Naive thymus-derived CD4-positive, alpha-beta T cell (primary cell): ENCODE measurements at regions of chr11 and their contacts with region 1.

Region 1: DNA sequence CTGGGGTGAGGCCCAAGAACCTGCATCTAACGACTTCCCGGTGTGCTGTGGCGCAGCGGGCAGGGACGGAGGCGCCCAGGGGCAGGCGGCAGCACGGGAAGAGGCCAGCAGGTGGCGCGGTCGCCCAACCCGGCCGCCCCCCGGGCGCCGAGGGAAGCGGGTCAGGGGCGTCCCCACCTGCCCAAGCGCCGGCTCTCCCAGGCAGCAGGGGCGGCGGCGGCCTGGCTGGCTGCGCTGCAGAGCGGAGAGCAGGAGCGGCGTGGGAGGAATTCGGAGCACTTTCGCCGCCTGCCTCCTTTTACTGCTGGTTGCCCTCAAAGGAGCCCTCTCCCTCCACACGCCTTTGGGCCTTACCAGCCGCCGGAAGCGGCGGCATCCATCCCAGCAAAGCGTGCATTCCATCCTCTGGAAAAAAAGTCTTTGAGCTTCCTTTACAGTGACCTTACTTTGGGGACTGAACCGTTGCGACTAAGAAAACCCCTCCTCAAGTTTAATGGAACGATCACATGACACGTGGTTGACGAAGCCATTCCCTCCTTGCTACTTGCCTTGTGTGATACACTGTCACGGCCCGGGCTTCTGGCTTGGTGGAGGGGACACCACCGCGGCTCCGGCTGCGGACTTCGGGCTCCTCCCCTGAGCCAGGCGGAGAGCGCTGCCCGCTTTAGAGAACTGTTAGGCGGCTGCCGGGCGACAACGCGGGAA is 106.8 kb upstream of the CLMP start:
- DNase-seq: peak; percentile 20 to 87 (median 50)
- ATAC-seq: peak; percentile 88
- H3K4me3 ChIP-seq: peak overlapping the region; percentile 40
- H3K4me3 Mint-ChIP-seq: peak overlapping the region; percentile 61 to 77 (median 70)
- H3K27ac ChIP-seq: no peak overlapping the region
- H3K27ac Mint-ChIP-seq: peak overlapping the region in 1 of 9 donors; percentile 68
- H3K4me1 ChIP-seq: peaks cover 11 to 25% of the 10 kb centered on the region in 2 donors
- H3K4me1 Mint-ChIP-seq: peaks cover 0 to 52% (median 21%) of the 10 kb centered on the region in 7 donors
- H3K27me3 ChIP-seq: no peaks in the 10 kb centered on the region
- H3K27me3 Mint-ChIP-seq: peaks cover 2 to 15% (median 12%) of the 10 kb centered on the region in 5 donors

Region 2: GRCh38 chr11:122863704-122864326 is 438.0 kb before region 1 on chr11:
- CTCF ChIA-PET with region 1: no interaction called
- POLR2A ChIA-PET with region 1: no interaction called
- intact Hi-C with region 1: no loop called
- DNase-seq: peak in 6 of 9 donors; percentile 19 to 51 (median 40)
- ATAC-seq: peak; percentile 60
- H3K4me3 ChIP-seq: no peak overlapping the region
- H3K4me3 Mint-ChIP-seq: no peak overlapping the region
- H3K27ac ChIP-seq: no peak overlapping the region
- H3K27ac Mint-ChIP-seq: no peak overlapping the region
- H3K4me1 ChIP-seq: no peaks in the 10 kb centered on the region
- H3K4me1 Mint-ChIP-seq: peaks cover 0 to 2% (median 0%) of the 10 kb centered on the region in 7 donors
- H3K27me3 ChIP-seq: no peaks in the 10 kb centered on the region
- H3K27me3 Mint-ChIP-seq: peaks cover 0 to 49% (median 0%) of the 10 kb centered on the region in 5 donors

Region 3: GRCh38 chr11:123357961-123358841 is 56.4 kb after region 1 on chr11:
- CTCF ChIA-PET with region 1: no interaction called
- POLR2A ChIA-PET with region 1: no interaction called
- intact Hi-C with region 1: loop called in 1 of 2 experiments (anchors 1 kb)
- DNase-seq: peak in 1 of 9 donors; percentile 64
- ATAC-seq: peak; percentile 59
- H3K4me3 ChIP-seq: peak overlapping the region; percentile 56
- H3K4me3 Mint-ChIP-seq: peak overlapping the region; percentile 4 to 98 (median 72)
- H3K27ac ChIP-seq: no peak overlapping the region
- H3K27ac Mint-ChIP-seq: peak overlapping the region in 1 of 9 donors; percentile 92
- H3K4me1 ChIP-seq: peaks cover 0 to 16% of the 10 kb centered on the region in 2 donors
- H3K4me1 Mint-ChIP-seq: peaks cover 8 to 61% (median 15%) of the 10 kb centered on the region in 7 donors
- H3K27me3 ChIP-seq: peaks cover 0 to 2% of the 10 kb centered on the region in 2 donors
- H3K27me3 Mint-ChIP-seq: peaks cover 0 to 55% (median 46%) of the 10 kb centered on the region in 5 donors

Region 4: DNA sequence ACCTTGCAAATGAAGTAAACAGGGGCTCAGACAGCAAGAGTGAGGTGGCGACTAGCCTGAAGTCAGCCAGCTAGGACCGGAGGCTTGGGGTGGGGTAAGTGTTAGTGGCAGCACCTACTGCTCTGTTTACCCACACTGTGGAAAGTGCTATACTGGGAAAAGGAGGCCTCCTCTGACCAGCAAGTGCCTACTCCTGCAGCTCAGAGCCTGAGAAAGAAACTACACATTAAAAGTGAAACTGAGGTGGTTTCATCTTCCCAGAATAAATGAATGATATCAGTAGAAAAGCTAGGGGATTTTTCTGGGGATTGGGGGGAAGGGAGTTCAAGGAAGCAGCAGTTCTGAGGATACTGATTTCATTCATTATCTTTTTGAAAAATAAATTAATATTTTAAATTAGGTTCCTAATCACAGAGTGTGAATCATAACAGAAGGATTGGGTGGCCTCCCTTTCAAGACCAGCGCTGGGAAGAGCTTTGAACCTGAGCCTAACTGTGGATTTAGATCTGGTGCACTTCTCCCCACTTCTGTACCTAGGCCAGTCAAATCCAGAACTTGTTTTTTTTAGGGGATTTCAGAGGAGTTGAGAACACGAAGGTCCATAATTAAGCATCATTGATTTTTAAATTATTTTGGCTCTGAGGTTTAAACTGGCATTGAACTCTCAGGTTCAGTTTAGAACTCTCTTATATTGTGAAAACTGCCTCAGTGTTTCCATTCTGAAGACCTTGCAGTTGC is 80.1 kb after region 1 on chr11:
- CTCF ChIA-PET with region 1: no interaction called
- POLR2A ChIA-PET with region 1: no interaction called
- intact Hi-C with region 1: loop called in 1 of 2 experiments (anchors 1 kb)
- DNase-seq: peak in 1 of 9 donors; percentile 65
- ATAC-seq: peak; percentile 45
- H3K4me3 ChIP-seq: no peak overlapping the region
- H3K4me3 Mint-ChIP-seq: peak overlapping the region in 1 of 10 donors; percentile 77
- H3K27ac ChIP-seq: no peak overlapping the region
- H3K27ac Mint-ChIP-seq: peak overlapping the region in 1 of 9 donors; percentile 86
- H3K4me1 ChIP-seq: peaks cover 0 to 6% of the 10 kb centered on the region in 2 donors
- H3K4me1 Mint-ChIP-seq: peaks cover 0 to 48% (median 3%) of the 10 kb centered on the region in 7 donors
- H3K27me3 ChIP-seq: peaks cover 0 to 3% of the 10 kb centered on the region in 2 donors
- H3K27me3 Mint-ChIP-seq: no peaks in the 10 kb centered on the region

Region 5: DNA sequence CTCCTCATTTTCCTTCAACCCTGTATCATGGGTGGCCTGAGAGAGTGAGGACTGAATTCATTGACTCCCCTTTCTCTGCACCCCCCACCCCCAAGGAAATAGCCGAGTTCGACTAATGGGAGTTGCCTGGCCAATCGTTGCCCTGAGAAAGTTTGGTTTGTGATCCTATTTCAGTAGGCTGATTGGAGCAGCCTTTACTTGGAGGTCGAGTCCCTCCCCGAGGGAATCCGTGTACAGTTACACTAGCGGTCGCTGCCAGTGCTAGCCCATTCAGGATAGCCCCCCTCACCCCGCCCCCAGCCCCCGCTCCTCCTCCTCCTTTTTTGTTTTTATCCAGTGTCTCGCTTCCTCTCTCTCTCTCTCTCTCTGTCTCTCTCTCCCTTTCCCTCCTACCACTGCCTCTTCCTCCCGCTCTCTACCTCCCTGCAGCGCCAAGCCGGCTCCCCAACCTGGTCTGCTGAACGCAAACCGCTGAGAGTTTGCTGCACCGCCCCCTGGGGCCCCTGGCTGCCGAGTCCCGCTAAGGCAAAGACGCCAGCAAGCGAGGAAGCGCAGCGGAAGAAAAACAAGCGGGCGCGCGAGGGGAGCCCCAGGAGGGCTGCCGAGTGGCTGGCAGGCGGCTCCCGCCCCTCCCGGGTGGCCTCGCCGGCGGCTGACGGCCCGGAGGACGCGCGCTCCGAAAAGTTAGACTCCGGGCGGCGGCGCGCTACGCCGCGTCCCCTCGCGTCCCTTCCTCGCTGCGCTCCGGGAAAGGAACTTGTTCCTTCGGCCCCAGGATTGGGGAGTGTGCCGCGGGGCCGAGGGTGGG is 128.3 kb after region 1 on chr11 and contains the start of gene GRAMD1B:
- CTCF ChIA-PET with region 1: no interaction called
- POLR2A ChIA-PET with region 1: no interaction called
- intact Hi-C with region 1: loop called (anchors 1 kb)
- DNase-seq: peak; percentile 60 to 84 (median 78)
- ATAC-seq: peak; percentile 84
- H3K4me3 ChIP-seq: peak within 1 kb of the TSS; percentile 53
- H3K4me3 Mint-ChIP-seq: peak within 1 kb of the TSS; percentile 85 to 99 (median 88)
- H3K27ac ChIP-seq: peak within 1 kb of the TSS; percentile 60
- H3K27ac Mint-ChIP-seq: peak within 1 kb of the TSS; percentile 46 to 94 (median 76)
- H3K4me1 ChIP-seq: peaks cover 0 to 12% of the 10 kb centered on the region in 2 donors
- H3K4me1 Mint-ChIP-seq: peaks cover 15 to 65% (median 25%) of the 10 kb centered on the region in 7 donors
- H3K27me3 ChIP-seq: no peaks in the 10 kb centered on the region
- H3K27me3 Mint-ChIP-seq: no peaks in the 10 kb centered on the region
- total RNA-seq, gene GRAMD1B: 9.7 to 88.9 (median 14.0) TPM

Region 6: DNA sequence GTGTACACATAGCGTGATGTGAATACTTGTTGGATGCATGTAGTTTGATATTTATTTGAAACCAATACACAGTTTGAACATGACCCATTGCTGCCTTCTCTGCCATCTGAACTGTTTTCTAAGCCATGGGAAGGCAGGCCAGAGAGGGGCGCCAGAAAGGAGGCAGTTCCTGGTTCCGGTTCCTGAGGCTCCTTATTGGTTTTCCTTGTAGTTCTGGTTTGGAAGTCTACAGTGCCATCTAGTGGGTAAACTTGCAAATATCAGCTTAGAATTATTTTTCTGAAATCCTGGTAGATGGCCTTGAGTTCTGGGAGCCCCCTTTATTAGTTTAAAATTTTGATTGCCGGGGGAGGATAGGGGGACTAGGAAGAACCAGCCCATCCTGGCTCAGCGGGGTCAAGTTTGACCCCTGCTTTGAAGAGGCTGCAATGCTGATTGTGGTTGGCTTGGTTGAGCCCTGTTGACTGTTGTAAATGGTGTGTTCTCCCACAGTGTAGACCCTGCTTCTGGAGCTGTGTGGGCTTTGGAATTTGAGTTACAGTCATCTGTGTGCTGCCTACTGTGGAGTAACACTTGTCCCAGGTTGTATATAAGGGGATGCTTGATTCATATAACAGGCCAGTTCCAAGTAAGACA is 176.6 kb after region 1 on chr11:
- CTCF ChIA-PET with region 1: interaction called, 7 read pairs
- POLR2A ChIA-PET with region 1: no interaction called
- intact Hi-C with region 1: loop called (anchors 1 kb)
- DNase-seq: peak in 7 of 9 donors; percentile 27 to 61 (median 50)
- ATAC-seq: peak; percentile 64
- H3K4me3 ChIP-seq: no peak overlapping the region
- H3K4me3 Mint-ChIP-seq: peak overlapping the region in 1 of 10 donors; percentile 39
- H3K27ac ChIP-seq: no peak overlapping the region
- H3K27ac Mint-ChIP-seq: peak overlapping the region in 1 of 9 donors; percentile 30
- H3K4me1 ChIP-seq: no peaks in the 10 kb centered on the region
- H3K4me1 Mint-ChIP-seq: peaks cover 0 to 59% (median 5%) of the 10 kb centered on the region in 7 donors
- H3K27me3 ChIP-seq: no peaks in the 10 kb centered on the region
- H3K27me3 Mint-ChIP-seq: no peaks in the 10 kb centered on the region

Region 7: GRCh38 chr11:123560006-123560405 is 258.2 kb after region 1 on chr11:
- CTCF ChIA-PET with region 1: no interaction called
- POLR2A ChIA-PET with region 1: no interaction called
- intact Hi-C with region 1: loop called in 1 of 2 experiments (anchors 10 kb)
- DNase-seq: peak in 6 of 9 donors; percentile 31 to 76 (median 57)
- ATAC-seq: peak; percentile 81
- H3K4me3 ChIP-seq: no peak overlapping the region
- H3K4me3 Mint-ChIP-seq: peak overlapping the region; percentile 75 to 95 (median 82)
- H3K27ac ChIP-seq: no peak overlapping the region
- H3K27ac Mint-ChIP-seq: peak overlapping the region in 7 of 9 donors; percentile 19 to 88 (median 79)
- H3K4me1 ChIP-seq: peaks cover 0 to 7% of the 10 kb centered on the region in 2 donors
- H3K4me1 Mint-ChIP-seq: peaks cover 7 to 32% (median 18%) of the 10 kb centered on the region in 7 donors
- H3K27me3 ChIP-seq: no peaks in the 10 kb centered on the region
- H3K27me3 Mint-ChIP-seq: peaks cover 0 to 4% (median 0%) of the 10 kb centered on the region in 5 donors

Region 8: DNA sequence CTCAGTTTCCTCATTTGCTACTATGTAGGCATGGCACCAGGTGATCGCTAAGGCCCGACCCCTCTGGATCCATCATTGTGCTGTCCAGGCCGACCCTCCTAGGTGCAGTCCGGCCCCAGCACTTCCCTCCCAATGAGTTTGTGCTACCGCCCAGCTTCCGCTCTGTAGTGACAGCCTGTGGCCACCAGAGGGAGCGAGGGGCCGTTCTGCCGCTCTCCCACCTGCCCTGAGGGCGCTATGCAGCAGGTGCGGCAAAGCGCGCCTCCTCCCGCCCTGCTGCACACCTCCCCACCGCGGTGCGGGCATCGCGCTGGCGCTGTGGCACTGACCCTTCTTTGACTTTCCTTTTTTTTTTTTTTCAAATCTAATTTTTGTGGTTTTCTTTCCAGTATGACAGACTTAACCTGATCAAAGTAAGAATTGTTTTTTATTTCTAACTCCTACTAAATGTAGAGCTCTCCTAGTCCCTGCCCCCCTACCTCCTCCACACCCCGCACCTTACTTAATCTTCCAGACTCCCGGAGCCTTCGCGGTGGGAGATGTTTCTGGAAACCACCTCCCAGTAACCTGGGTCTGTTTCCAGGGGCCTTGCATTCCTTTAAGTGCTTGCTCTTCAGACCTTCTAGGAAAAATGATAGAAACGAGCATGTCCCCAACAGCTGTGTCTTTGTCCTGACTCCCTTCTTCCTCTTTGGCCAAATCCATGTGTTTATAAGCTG is 278.9 kb after region 1 on chr11:
- CTCF ChIA-PET with region 1: no interaction called
- POLR2A ChIA-PET with region 1: no interaction called
- intact Hi-C with region 1: loop called (anchors 1 to 5 kb)
- DNase-seq: peak; percentile 43 to 71 (median 56)
- ATAC-seq: peak; percentile 91
- H3K4me3 ChIP-seq: no peak overlapping the region
- H3K4me3 Mint-ChIP-seq: peak overlapping the region in 5 of 10 donors; percentile 9 to 62 (median 25)
- H3K27ac ChIP-seq: no peak overlapping the region
- H3K27ac Mint-ChIP-seq: peak overlapping the region in 2 of 9 donors; percentile 4 to 36
- H3K4me1 ChIP-seq: peaks cover 0 to 4% of the 10 kb centered on the region in 2 donors
- H3K4me1 Mint-ChIP-seq: peaks cover 7 to 30% (median 18%) of the 10 kb centered on the region in 7 donors
- H3K27me3 ChIP-seq: no peaks in the 10 kb centered on the region
- H3K27me3 Mint-ChIP-seq: peaks cover 0 to 4% (median 0%) of the 10 kb centered on the region in 5 donors